ENCODE measurements at regions of chr7 and their contacts with region 1.

Region 1: GRCh38 chr7:85023045-85023712 is 163.7 kb downstream of the SEMA3D start:
- DNase-seq: peak in 1 of 2 experiments; percentile 63
- H3K4me3 ChIP-seq: no peak overlapping the region
- H3K4me3 Mint-ChIP-seq: no peak overlapping the region
- H3K27ac Mint-ChIP-seq: no peak overlapping the region
- H3K4me1 ChIP-seq: no peaks in the 10 kb centered on the region
- H3K4me1 Mint-ChIP-seq: no peaks in the 10 kb centered on the region
- H3K27me3 ChIP-seq: no peaks in the 10 kb centered on the region
- H3K27me3 Mint-ChIP-seq: no peaks in the 10 kb centered on the region
- CTCF ChIP-seq: peak; percentile 63 to 72

Region 2: GRCh38 chr7:83976295-83976694 is 1046.9 kb before region 1 on chr7:
- CTCF ChIA-PET with region 1: no interaction called
- POLR2A ChIA-PET with region 1: no interaction called
- intact Hi-C with region 1: loop called (anchors 1 kb)
- DNase-seq: peak in 1 of 2 experiments; percentile 63
- H3K4me3 ChIP-seq: no peak overlapping the region
- H3K4me3 Mint-ChIP-seq: no peak overlapping the region
- H3K27ac Mint-ChIP-seq: no peak overlapping the region
- H3K4me1 ChIP-seq: no peaks in the 10 kb centered on the region
- H3K4me1 Mint-ChIP-seq: no peaks in the 10 kb centered on the region
- H3K27me3 ChIP-seq: no peaks in the 10 kb centered on the region
- H3K27me3 Mint-ChIP-seq: no peaks in the 10 kb centered on the region
- CTCF ChIP-seq: peak; percentile 42 to 69

Region 3: GRCh38 chr7:84194543-84195271 is 828.5 kb before region 1 on chr7 and contains the start of gene SEMA3A:
- CTCF ChIA-PET with region 1: no interaction called
- POLR2A ChIA-PET with region 1: no interaction called
- intact Hi-C with region 1: loop called (anchors 2 kb)
- DNase-seq: peak; percentile 66 to 67
- H3K4me3 ChIP-seq: peak within 1 kb of the TSS; percentile 58
- H3K4me3 Mint-ChIP-seq: peak within 1 kb of the TSS; percentile 83
- H3K27ac Mint-ChIP-seq: peak within 1 kb of the TSS; percentile 45
- H3K4me1 ChIP-seq: peaks cover 14% of the 10 kb centered on the region
- H3K4me1 Mint-ChIP-seq: peaks cover 24% of the 10 kb centered on the region
- H3K27me3 ChIP-seq: no peaks in the 10 kb centered on the region
- H3K27me3 Mint-ChIP-seq: no peaks in the 10 kb centered on the region
- CTCF ChIP-seq: no peak
- total RNA-seq, gene SEMA3A: 55.1 and 55.4 TPM in 2 replicates

Region 4: DNA sequence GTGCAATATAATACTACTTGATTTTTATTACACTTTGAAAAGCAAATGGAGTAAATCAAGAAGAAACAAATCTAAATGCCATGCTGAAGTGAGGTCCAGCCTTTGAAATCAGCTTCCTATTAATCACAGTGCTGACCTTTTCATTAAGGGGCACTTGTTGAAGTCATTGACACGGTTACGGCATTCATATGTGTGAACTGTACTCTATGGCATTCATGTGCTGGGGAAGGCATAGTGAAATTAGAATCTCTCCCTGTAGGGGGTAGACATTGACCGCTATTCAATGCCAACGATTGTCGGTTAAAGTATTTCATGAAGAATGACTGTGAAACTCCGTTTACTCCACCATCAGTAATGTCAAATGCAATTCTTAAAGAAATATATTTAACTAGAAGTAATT is 532.5 kb before region 1 on chr7:
- CTCF ChIA-PET with region 1: no interaction called
- POLR2A ChIA-PET with region 1: no interaction called
- intact Hi-C with region 1: loop called (anchors 2 kb)
- DNase-seq: peak in 1 of 2 experiments; percentile 11
- H3K4me3 ChIP-seq: no peak overlapping the region
- H3K4me3 Mint-ChIP-seq: no peak overlapping the region
- H3K27ac Mint-ChIP-seq: no peak overlapping the region
- H3K4me1 ChIP-seq: no peaks in the 10 kb centered on the region
- H3K4me1 Mint-ChIP-seq: peaks cover 6% of the 10 kb centered on the region
- H3K27me3 ChIP-seq: no peaks in the 10 kb centered on the region
- H3K27me3 Mint-ChIP-seq: no peaks in the 10 kb centered on the region
- CTCF ChIP-seq: peak in 1 of 2 experiments; percentile 4

Region 5: DNA sequence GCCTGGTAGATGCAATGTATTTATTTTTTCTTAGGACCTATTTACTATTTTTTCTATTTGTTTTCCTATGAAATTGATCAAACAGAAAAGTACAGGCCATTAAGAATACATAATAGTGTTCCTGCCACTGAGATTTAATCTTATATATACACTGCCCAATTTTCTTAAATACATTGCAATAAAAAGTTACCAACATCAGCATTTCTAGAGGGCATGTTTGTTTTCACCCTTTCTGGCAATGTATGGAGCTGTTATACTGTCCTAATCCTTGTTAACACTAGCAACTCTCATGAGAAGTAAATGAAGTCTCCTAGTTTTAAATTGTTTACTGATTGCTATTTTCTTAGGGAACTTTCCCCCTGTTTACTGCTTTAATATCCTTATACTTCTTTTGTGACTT is 469.5 kb before region 1 on chr7:
- CTCF ChIA-PET with region 1: no interaction called
- POLR2A ChIA-PET with region 1: no interaction called
- intact Hi-C with region 1: no loop called
- DNase-seq: no peak
- H3K4me3 ChIP-seq: no peak overlapping the region
- H3K4me3 Mint-ChIP-seq: no peak overlapping the region
- H3K27ac Mint-ChIP-seq: no peak overlapping the region
- H3K4me1 ChIP-seq: no peaks in the 10 kb centered on the region
- H3K4me1 Mint-ChIP-seq: no peaks in the 10 kb centered on the region
- H3K27me3 ChIP-seq: no peaks in the 10 kb centered on the region; the same call in 1 of the 2 replicates
- H3K27me3 Mint-ChIP-seq: peaks cover 6% of the 10 kb centered on the region
- CTCF ChIP-seq: no peak

Region 6: GRCh38 chr7:84624527-84624926 is 398.7 kb before region 1 on chr7:
- CTCF ChIA-PET with region 1: no interaction called
- POLR2A ChIA-PET with region 1: no interaction called
- intact Hi-C with region 1: loop called (anchors 5 kb)
- DNase-seq: no peak
- H3K4me3 ChIP-seq: no peak overlapping the region
- H3K4me3 Mint-ChIP-seq: no peak overlapping the region
- H3K27ac Mint-ChIP-seq: no peak overlapping the region
- H3K4me1 ChIP-seq: no peaks in the 10 kb centered on the region
- H3K4me1 Mint-ChIP-seq: no peaks in the 10 kb centered on the region
- H3K27me3 ChIP-seq: no peaks in the 10 kb centered on the region
- H3K27me3 Mint-ChIP-seq: no peaks in the 10 kb centered on the region
- CTCF ChIP-seq: no peak

Region 7: GRCh38 chr7:84757761-84758160 is 265.4 kb before region 1 on chr7:
- CTCF ChIA-PET with region 1: no interaction called
- POLR2A ChIA-PET with region 1: no interaction called
- intact Hi-C with region 1: loop called (anchors 10 kb)
- DNase-seq: no peak
- H3K4me3 ChIP-seq: no peak overlapping the region
- H3K4me3 Mint-ChIP-seq: no peak overlapping the region
- H3K27ac Mint-ChIP-seq: no peak overlapping the region
- H3K4me1 ChIP-seq: no peaks in the 10 kb centered on the region
- H3K4me1 Mint-ChIP-seq: no peaks in the 10 kb centered on the region
- H3K27me3 ChIP-seq: no peaks in the 10 kb centered on the region
- H3K27me3 Mint-ChIP-seq: no peaks in the 10 kb centered on the region
- CTCF ChIP-seq: no peak

Region 8: DNA sequence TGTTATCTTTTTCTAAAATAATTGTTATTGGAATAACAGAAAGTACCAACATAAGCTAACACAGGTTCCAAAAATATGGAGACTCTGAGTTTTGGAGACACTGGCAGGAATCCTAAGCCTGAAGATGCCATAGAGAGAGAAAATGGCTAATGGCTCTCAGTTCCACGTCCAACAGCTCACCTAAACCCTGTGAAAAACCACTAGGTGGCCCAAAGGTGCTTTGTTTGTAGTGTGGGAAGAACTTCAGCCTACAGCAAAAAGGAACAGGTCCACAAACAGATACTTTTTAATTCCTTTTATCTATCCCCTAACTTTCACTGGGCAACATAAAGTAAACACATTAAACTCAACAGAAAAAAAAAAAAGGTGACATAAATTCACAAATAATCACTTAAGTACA is 108.6 kb before region 1 on chr7:
- CTCF ChIA-PET with region 1: no interaction called
- POLR2A ChIA-PET with region 1: no interaction called
- intact Hi-C with region 1: loop called (anchors 1 kb)
- DNase-seq: peak in 1 of 2 experiments; percentile 45
- H3K4me3 ChIP-seq: no peak overlapping the region
- H3K4me3 Mint-ChIP-seq: no peak overlapping the region
- H3K27ac Mint-ChIP-seq: no peak overlapping the region
- H3K4me1 ChIP-seq: peaks cover 30% of the 10 kb centered on the region
- H3K4me1 Mint-ChIP-seq: peaks cover 22% of the 10 kb centered on the region
- H3K27me3 ChIP-seq: no peaks in the 10 kb centered on the region
- H3K27me3 Mint-ChIP-seq: no peaks in the 10 kb centered on the region
- CTCF ChIP-seq: peak; percentile 26 to 29

Region 9: GRCh38 chr7:85114342-85114741 is 91.2 kb after region 1 on chr7:
- CTCF ChIA-PET with region 1: no interaction called
- POLR2A ChIA-PET with region 1: no interaction called
- intact Hi-C with region 1: no loop called
- DNase-seq: no peak
- H3K4me3 ChIP-seq: no peak overlapping the region
- H3K4me3 Mint-ChIP-seq: no peak overlapping the region
- H3K27ac Mint-ChIP-seq: no peak overlapping the region
- H3K4me1 ChIP-seq: no peaks in the 10 kb centered on the region
- H3K4me1 Mint-ChIP-seq: no peaks in the 10 kb centered on the region
- H3K27me3 ChIP-seq: no peaks in the 10 kb centered on the region
- H3K27me3 Mint-ChIP-seq: no peaks in the 10 kb centered on the region
- CTCF ChIP-seq: no peak

Measured in Caco-2 (cell line).